ENCODE measurements at regions of chr2 and their contacts with region 1.

Region 1: DNA sequence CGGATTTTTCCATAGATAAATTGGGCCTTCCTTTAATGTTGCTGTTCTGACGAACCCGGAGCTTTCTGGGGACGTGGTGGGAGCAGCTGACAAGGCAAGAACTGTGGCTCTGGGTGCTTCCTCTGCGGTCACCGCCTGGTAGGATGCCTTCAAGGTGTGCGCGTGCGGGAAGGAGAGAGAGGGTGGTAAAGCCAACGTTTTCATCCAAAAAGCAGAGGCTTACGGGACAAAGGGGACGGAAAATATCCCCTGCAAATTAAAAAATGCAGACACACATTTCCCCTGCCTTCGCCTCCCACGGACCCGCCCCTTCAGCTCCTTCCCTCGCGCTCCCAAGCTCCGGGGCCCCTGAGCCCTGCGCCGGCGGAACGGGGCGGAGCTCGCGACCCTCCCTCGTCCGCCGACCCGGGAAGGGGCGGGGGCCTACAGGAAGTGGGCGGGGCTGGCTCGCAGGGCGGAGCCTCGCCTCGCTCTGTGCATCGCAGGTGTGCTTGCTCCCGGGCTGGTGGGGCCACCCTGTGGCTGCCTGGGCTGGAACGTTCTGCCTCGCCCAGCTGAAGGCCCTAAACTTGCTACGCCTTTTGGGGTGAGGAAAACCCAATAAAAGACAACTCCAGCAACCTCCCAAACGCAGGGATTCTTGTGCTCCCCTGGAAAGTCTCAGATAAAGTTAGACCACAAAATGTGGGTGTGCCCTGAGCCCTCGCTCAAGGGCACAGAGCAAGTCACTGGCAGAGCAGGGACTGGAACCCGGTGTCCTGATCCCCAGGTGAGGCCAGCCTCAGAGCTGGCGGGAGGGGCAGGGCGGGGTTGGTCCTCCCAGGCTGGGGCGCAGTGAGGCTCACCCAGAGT is 25.4 kb upstream of the SLC66A3 start:
- DNase-seq: peak; percentile 72 to 91 (median 88)
- ATAC-seq: peak; percentile 93
- H3K4me3 ChIP-seq: peak overlapping the region; percentile 66
- H3K4me3 Mint-ChIP-seq: peak overlapping the region; percentile 72 to 88 (median 78)
- H3K27ac ChIP-seq: peak overlapping the region; percentile 75
- H3K27ac Mint-ChIP-seq: peak overlapping the region in 8 of 9 donors; percentile 77 to 92 (median 86)
- H3K4me1 ChIP-seq: peaks cover 25 to 34% of the 10 kb centered on the region in 2 donors
- H3K4me1 Mint-ChIP-seq: peaks cover 8 to 45% (median 33%) of the 10 kb centered on the region in 7 donors
- H3K27me3 ChIP-seq: no peaks in the 10 kb centered on the region
- H3K27me3 Mint-ChIP-seq: peaks cover 0 to 15% (median 0%) of the 10 kb centered on the region in 5 donors

Region 2: GRCh38 chr2:10812362-10813162 is 317.3 kb before region 1 on chr2 and contains the start of gene PDIA6:
- CTCF ChIA-PET with region 1: interaction called, 5 read pairs
- POLR2A ChIA-PET with region 1: interaction called, 3 read pairs
- intact Hi-C with region 1: loop called (anchors 1 kb)
- DNase-seq: peak; percentile 87 to 96 (median 90)
- ATAC-seq: peak; percentile 95
- H3K4me3 ChIP-seq: peak within 1 kb of the TSS; percentile 73
- H3K4me3 Mint-ChIP-seq: peak within 1 kb of the TSS; percentile 87 to 95 (median 91)
- H3K27ac ChIP-seq: peak within 1 kb of the TSS; percentile 86
- H3K27ac Mint-ChIP-seq: peak within 1 kb of the TSS; percentile 77 to 96 (median 84)
- H3K4me1 ChIP-seq: peaks cover 14 to 15% of the 10 kb centered on the region in 2 donors
- H3K4me1 Mint-ChIP-seq: peaks cover 28 to 44% (median 39%) of the 10 kb centered on the region in 7 donors
- H3K27me3 ChIP-seq: no peaks in the 10 kb centered on the region
- H3K27me3 Mint-ChIP-seq: peaks cover 0 to 15% (median 0%) of the 10 kb centered on the region in 5 donors
- total RNA-seq, gene PDIA6: 24.3 to 173 (median 46.8) TPM

Region 3: GRCh38 chr2:11056614-11057013 is 73.2 kb before region 1 on chr2:
- CTCF ChIA-PET with region 1: no interaction called
- POLR2A ChIA-PET with region 1: no interaction called
- intact Hi-C with region 1: no loop called
- DNase-seq: no peak
- ATAC-seq: no peak
- H3K4me3 ChIP-seq: no peak overlapping the region
- H3K4me3 Mint-ChIP-seq: no peak overlapping the region
- H3K27ac ChIP-seq: no peak overlapping the region
- H3K27ac Mint-ChIP-seq: no peak overlapping the region
- H3K4me1 ChIP-seq: no peaks in the 10 kb centered on the region
- H3K4me1 Mint-ChIP-seq: no peaks in the 10 kb centered on the region
- H3K27me3 ChIP-seq: no peaks in the 10 kb centered on the region
- H3K27me3 Mint-ChIP-seq: peaks cover 7 to 20% (median 13%) of the 10 kb centered on the region in 5 donors

Region 4: GRCh38 chr2:11154923-11155380 is 25.1 kb after region 1 on chr2:
- CTCF ChIA-PET with region 1: interaction called, 7 read pairs
- POLR2A ChIA-PET with region 1: interaction called, 34 read pairs
- intact Hi-C with region 1: loop called (anchors 1 kb)
- DNase-seq: peak; percentile 92 to 97 (median 96)
- ATAC-seq: peak; percentile 94
- H3K4me3 ChIP-seq: peak overlapping the region; percentile 76
- H3K4me3 Mint-ChIP-seq: peak overlapping the region; percentile 73 to 88 (median 84)
- H3K27ac ChIP-seq: peak overlapping the region; percentile 75
- H3K27ac Mint-ChIP-seq: peak overlapping the region; percentile 44 to 94 (median 90)
- H3K4me1 ChIP-seq: peaks cover 10 to 15% of the 10 kb centered on the region in 2 donors
- H3K4me1 Mint-ChIP-seq: peaks cover 10 to 22% (median 18%) of the 10 kb centered on the region in 7 donors
- H3K27me3 ChIP-seq: no peaks in the 10 kb centered on the region
- H3K27me3 Mint-ChIP-seq: peaks cover 0 to 10% (median 0%) of the 10 kb centered on the region in 5 donors

Region 5: DNA sequence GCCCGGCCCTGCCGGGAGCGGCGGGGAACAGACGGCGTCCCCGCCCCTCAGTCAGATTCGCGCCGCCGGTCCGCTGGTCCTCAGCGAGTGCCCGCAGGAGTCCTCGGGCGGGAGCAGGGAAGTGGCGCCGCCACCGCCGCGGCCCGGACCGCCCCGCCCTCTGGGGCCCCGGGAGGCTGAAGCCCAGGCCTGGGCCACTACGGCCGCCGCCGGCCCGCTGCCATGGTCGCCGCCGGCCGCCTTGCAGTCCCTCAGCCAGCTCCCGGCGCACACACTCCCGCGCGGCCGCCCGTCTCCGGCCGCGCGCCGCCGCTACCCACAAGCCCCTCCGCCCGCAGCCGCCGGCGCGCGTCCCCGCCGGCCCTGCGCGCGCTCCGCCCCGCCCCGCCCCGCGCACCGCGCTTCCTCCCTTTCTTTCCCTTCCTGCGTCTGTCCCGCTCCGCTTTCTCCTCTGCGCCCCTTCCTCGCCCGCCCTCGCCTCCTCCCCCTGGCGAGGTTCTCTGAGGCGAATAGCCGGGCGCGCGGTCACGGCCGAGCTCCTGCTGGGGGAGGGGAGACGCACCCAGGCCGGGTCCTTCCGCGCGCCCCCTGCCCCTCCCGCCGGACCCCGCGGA is 214.6 kb after region 1 on chr2 and contains the start of gene ROCK2:
- CTCF ChIA-PET with region 1: interaction called, 4 read pairs
- POLR2A ChIA-PET with region 1: interaction called, 6 read pairs
- intact Hi-C with region 1: loop called (anchors 1 kb)
- DNase-seq: peak; percentile 45 to 81 (median 58)
- ATAC-seq: peak; percentile 82
- H3K4me3 ChIP-seq: peak within 1 kb of the TSS; percentile 87
- H3K4me3 Mint-ChIP-seq: peak within 1 kb of the TSS; percentile 93 to 100 (median 98)
- H3K27ac ChIP-seq: peak within 1 kb of the TSS; percentile 76
- H3K27ac Mint-ChIP-seq: peak within 1 kb of the TSS; percentile 87 to 96 (median 91)
- H3K4me1 ChIP-seq: peaks cover 13% of the 10 kb centered on the region in 2 donors
- H3K4me1 Mint-ChIP-seq: peaks cover 18 to 43% (median 33%) of the 10 kb centered on the region in 7 donors
- H3K27me3 ChIP-seq: no peaks in the 10 kb centered on the region
- H3K27me3 Mint-ChIP-seq: peaks cover 0 to 25% (median 0%) of the 10 kb centered on the region in 5 donors
- total RNA-seq, gene ROCK2: 12.0 to 23.9 (median 18.8) TPM

Region 6: DNA sequence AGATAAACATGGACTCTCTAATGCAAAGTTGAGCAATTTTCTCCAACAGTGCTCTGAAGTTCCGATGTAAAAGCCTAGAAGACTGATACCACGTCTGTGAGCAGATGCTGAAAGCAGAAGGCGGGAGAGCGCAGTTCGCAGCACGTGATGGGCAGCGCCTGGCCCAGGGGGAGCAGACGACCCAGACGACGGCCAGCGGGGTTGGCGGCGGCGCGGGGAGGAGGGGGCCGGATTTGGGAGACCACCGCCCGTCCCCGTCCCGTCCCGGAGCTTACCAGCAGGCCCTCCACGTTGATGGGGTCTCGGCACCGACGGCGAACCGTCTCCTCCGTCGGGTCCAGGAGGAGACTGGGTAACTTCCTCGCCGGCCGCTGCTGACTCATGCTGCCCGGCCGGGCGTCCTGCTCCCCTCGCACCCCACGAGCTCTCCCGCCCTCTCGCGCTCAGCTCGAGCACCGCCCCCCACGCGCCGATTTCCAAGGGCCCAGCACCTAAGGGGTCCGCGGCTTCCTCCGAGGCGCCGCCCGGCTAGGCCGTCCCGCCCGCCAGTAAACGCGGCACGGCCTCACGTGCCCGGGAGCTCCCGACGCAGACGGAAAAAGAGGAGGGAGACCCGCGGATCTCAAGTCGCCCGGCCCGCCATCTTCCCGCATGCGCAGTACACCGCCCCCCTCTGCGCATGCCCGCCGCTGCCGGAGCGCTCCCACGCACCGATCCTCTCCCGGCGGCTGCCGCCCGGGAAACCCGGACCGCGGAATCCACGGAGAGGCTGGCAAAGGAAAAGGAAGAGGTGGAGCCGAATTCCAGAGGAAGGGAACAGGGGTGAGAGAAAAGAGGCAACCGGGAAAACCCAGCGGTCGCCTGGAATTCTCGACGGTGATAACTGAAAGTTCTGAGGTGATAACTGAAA is 335.9 kb after region 1 on chr2 and contains the start of gene E2F6:
- CTCF ChIA-PET with region 1: interaction called, 7 read pairs
- POLR2A ChIA-PET with region 1: no interaction called
- intact Hi-C with region 1: loop called (anchors 1 to 5 kb)
- DNase-seq: peak; percentile 80 to 94 (median 87)
- ATAC-seq: peak; percentile 83
- H3K4me3 ChIP-seq: peak within 1 kb of the TSS; percentile 69
- H3K4me3 Mint-ChIP-seq: peak within 1 kb of the TSS; percentile 91 to 99 (median 98)
- H3K27ac ChIP-seq: peak within 1 kb of the TSS; percentile 73
- H3K27ac Mint-ChIP-seq: peak within 1 kb of the TSS; percentile 87 to 97 (median 93)
- H3K4me1 ChIP-seq: peaks cover 5 to 8% of the 10 kb centered on the region in 2 donors
- H3K4me1 Mint-ChIP-seq: peaks cover 27 to 49% (median 39%) of the 10 kb centered on the region in 7 donors
- H3K27me3 ChIP-seq: no peaks in the 10 kb centered on the region
- H3K27me3 Mint-ChIP-seq: peaks cover 0 to 2% (median 0%) of the 10 kb centered on the region in 5 donors
- total RNA-seq, gene E2F6: 6.2 to 11.6 (median 9.2) TPM

Region 7: DNA sequence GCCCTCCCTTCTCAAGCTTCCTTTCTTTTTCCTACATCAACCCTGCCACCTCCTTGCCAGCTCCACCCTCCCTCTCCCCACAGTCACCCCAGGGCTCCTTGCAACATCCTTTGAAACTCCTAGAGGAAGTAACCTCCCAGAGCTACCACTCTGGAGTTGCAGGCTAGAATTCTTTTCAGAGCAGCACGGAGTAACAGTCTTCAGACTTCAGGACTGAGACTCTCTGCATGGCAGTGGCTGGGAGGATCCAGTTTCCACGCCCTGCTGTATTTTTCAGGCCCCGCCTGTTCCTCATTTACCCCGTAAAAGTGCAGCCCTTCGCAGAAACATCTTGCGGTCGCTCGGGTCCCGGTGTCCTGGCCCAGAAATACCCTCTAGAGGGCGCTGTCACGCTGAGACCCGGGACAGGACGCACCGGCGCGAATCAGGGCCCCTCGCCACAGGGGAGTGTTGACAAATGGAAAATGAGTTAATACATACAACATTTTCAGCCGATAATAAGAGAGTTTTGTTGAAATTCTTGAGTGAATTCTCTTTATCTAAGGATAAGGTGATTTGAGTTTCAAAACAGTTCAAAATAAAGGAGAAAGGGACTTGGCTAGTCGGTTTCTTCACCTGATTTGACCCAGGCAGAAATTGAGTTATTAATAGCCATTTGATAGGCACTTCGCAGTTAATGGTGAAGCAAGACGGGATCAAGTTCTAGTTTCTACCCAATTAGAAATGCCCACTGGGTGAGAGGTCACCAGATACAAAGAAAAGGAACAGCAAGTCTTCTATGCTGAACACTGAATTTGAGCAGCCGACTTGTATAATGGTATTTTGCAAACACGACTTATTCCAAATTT is 558.6 kb after region 1 on chr2:
- CTCF ChIA-PET with region 1: no interaction called
- POLR2A ChIA-PET with region 1: no interaction called
- intact Hi-C with region 1: loop called (anchors 1 to 10 kb)
- DNase-seq: peak; percentile 62 to 82 (median 72)
- ATAC-seq: peak; percentile 93
- H3K4me3 ChIP-seq: peak overlapping the region; percentile 25
- H3K4me3 Mint-ChIP-seq: peak overlapping the region; percentile 25 to 73 (median 54)
- H3K27ac ChIP-seq: no peak overlapping the region
- H3K27ac Mint-ChIP-seq: peak overlapping the region in 2 of 9 donors; percentile 38 to 77
- H3K4me1 ChIP-seq: peaks cover 3 to 7% of the 10 kb centered on the region in 2 donors
- H3K4me1 Mint-ChIP-seq: peaks cover 7 to 19% (median 13%) of the 10 kb centered on the region in 7 donors
- H3K27me3 ChIP-seq: no peaks in the 10 kb centered on the region
- H3K27me3 Mint-ChIP-seq: peaks cover 0 to 21% (median 5%) of the 10 kb centered on the region in 5 donors

Measured in naive thymus-derived CD4-positive, alpha-beta T cell (primary cell).